Activated CD4-positive, alpha-beta memory T cell treated with anti-CD3 and anti-CD28 coated beads, Interleukin-2, amount 10 ng/mL, durations not matched to agents 7 days and 5 days (primary cell): ENCODE measurements at regions of chr1 and their contacts with region 1.

Region 1: DNA sequence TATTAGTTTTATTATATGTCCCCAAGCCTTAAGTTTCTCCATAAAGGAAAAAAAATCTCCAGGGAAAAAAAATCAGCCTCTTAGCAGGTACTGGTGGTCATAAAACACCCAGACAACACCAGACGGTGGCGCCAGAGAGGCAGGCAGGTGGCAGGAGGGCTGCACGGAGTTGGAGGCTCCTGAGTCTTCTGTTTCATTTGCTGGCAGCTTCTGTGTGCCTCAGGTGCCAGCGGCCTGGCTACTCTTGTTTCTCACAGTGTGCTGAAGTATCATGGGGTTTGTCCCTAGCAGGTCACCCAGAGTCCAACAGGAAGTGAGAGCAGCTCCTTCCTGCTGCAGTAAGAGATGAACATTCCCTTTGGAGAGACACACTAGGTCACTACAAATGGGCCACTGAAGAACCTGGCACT is 123.3 kb upstream of the GADD45A start:
- DNase-seq: peak; percentile 85
- H3K4me3 Mint-ChIP-seq: no peak overlapping the region
- H3K27ac Mint-ChIP-seq: no peak overlapping the region
- H3K4me1 Mint-ChIP-seq: peaks cover 6% of the 10 kb centered on the region
- H3K27me3 Mint-ChIP-seq: peaks cover 2% of the 10 kb centered on the region

Region 2: GRCh38 chr1:67749844-67750689 is 188.4 kb after region 1 on chr1:
- CTCF ChIA-PET with region 1: interaction called, 16 read pairs
- POLR2A ChIA-PET with region 1: no interaction called
- DNase-seq: no peak
- H3K4me3 Mint-ChIP-seq: no peak overlapping the region
- H3K27ac Mint-ChIP-seq: no peak overlapping the region
- H3K4me1 Mint-ChIP-seq: peaks cover 30% of the 10 kb centered on the region
- H3K27me3 Mint-ChIP-seq: peaks cover 12% of the 10 kb centered on the region